Breast epithelium (tissue), 4 donors: ENCODE measurements at regions of chr16 and their contacts with region 1.

Region 1: GRCh38 chr16:11056090-11056992 is 112.0 kb downstream of the CLEC16A start:
- DNase-seq: no peak
- H3K4me3 ChIP-seq: no peak overlapping the region
- H3K27ac ChIP-seq: no peak overlapping the region
- H3K4me1 ChIP-seq: no peaks in the 10 kb centered on the region
- H3K27me3 ChIP-seq: no peaks in the 10 kb centered on the region
- CTCF ChIP-seq: no peak
- POLR2A ChIP-seq: no peak

Region 2: DNA sequence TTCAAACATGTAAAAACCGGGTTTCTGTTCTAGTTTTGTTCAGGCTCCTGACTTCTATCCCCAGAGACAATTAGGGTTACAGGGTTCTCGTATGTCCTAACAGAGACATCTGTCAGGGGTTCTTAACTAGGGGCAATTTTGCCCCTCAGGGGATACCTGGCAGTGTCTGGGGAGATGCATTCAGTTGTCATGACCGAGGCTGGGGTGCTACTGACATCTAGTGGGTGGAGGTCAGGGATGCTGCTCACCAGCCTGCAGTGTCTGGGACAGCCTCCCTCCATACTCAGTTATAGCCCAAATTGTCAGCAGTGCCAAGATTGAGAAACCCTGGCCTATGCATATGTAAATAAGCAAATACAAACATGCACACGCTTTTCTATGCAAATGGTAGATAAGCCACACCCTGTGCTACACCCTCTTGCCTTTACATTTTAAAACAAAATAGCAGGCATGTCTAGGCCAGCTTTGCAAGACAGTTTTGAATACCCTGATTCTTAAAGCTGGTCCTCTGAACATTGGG is 74.6 kb before region 1 on chr16:
- intact Hi-C with region 1: no loop called
- DNase-seq: no peak
- H3K4me3 ChIP-seq: no peak overlapping the region
- H3K27ac ChIP-seq: peak overlapping the region in 1 of 2 donors; percentile 49
- H3K4me1 ChIP-seq: peaks cover 0 to 5% of the 10 kb centered on the region in 2 donors
- H3K27me3 ChIP-seq: no peaks in the 10 kb centered on the region
- CTCF ChIP-seq: no peak
- POLR2A ChIP-seq: no peak

Region 3: GRCh38 chr16:11016993-11017392 is 39.3 kb before region 1 on chr16:
- intact Hi-C with region 1: loop called (anchors 2 kb)
- DNase-seq: no peak
- H3K4me3 ChIP-seq: no peak overlapping the region
- H3K27ac ChIP-seq: no peak overlapping the region
- H3K4me1 ChIP-seq: no peaks in the 10 kb centered on the region
- H3K27me3 ChIP-seq: no peaks in the 10 kb centered on the region
- CTCF ChIP-seq: no peak
- POLR2A ChIP-seq: no peak

Region 4: DNA sequence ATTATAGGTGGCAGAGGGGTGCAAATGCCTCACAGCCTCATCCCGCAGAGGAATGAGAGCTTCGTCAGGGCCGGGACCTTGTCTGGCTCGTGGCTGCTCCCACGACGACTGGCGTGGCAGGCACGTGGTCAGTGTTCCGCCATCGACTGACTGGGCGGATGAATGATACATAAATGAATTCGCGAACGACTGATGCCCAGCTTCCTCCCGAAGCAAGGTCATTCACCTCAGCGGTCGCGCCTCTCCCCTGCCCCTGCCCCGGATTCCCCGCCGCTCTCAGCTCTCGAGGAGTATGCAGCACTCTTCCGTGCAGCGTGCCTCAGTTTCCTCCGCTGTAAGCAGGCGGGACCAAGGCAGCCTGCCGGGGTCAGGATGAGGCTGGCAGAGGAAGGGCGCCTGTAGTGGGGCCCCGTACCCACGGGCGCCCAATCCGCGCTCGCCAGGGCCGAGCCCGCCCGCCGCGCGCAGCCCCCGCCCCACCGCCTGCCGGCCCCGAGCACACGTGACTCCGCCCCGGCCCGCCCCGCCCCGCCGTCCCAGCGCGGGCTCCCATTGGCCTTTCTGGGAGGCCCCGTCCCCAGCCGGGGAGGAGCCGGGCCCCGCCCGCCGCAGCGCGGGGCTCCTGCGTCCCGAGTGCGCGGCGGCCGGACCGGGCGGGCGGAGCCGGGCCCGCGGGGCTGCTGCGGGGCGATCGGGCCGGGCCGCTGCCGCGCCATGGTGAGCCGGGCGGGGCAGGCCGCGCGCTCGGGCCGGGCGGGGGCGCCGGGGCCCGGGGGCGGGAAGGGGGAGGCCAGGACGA is 611.7 kb after region 1 on chr16 and contains the start of gene SNN:
- intact Hi-C with region 1: no loop called
- DNase-seq: peak; percentile 79 to 83
- H3K4me3 ChIP-seq: peak within 1 kb of the TSS; percentile 85 to 95 (median 90)
- H3K27ac ChIP-seq: peak within 1 kb of the TSS; percentile 78 to 80
- H3K4me1 ChIP-seq: peaks cover 5 to 11% of the 10 kb centered on the region in 2 donors
- H3K27me3 ChIP-seq: no peaks in the 10 kb centered on the region
- CTCF ChIP-seq: no peak
- POLR2A ChIP-seq: no peak
- total RNA-seq, gene SNN: 16.4 to 68.3 (median 18.7) TPM

Region 5: GRCh38 chr16:11700264-11701029 is 644.1 kb after region 1 on chr16:
- intact Hi-C with region 1: loop called (anchors 5 kb)
- DNase-seq: no peak
- H3K4me3 ChIP-seq: no peak overlapping the region
- H3K27ac ChIP-seq: no peak overlapping the region
- H3K4me1 ChIP-seq: no peaks in the 10 kb centered on the region
- H3K27me3 ChIP-seq: no peaks in the 10 kb centered on the region
- CTCF ChIP-seq: no peak
- POLR2A ChIP-seq: no peak